ENCODE measurements at regions of chr6 and their contacts with region 1.

Region 1: GRCh38 chr6:71288228-71289001 is at the start of gene OGFRL1:
- DNase-seq: peak; percentile 72
- H3K4me3 Mint-ChIP-seq: peak within 1 kb of the TSS; percentile 78
- H3K27ac Mint-ChIP-seq: peak within 1 kb of the TSS; percentile 11
- H3K4me1 Mint-ChIP-seq: peaks cover 29% of the 10 kb centered on the region
- H3K27me3 Mint-ChIP-seq: no peaks in the 10 kb centered on the region
- CTCF ChIP-seq: no peak
- total RNA-seq, gene OGFRL1: 37.7 and 70.8 TPM in 2 replicates

Region 2: GRCh38 chr6:71248306-71248765 is 40.1 kb before region 1 on chr6:
- CTCF ChIA-PET with region 1: interaction called, 5 read pairs
- POLR2A ChIA-PET with region 1: interaction called, 51 read pairs
- intact Hi-C with region 1: loop called (anchors 2 kb)
- DNase-seq: peak; percentile 48
- H3K4me3 Mint-ChIP-seq: no peak overlapping the region
- H3K27ac Mint-ChIP-seq: no peak overlapping the region
- H3K4me1 Mint-ChIP-seq: peaks cover 32% of the 10 kb centered on the region
- H3K27me3 Mint-ChIP-seq: no peaks in the 10 kb centered on the region
- CTCF ChIP-seq: no peak

Region 3: GRCh38 chr6:71299541-71300470 is 11.4 kb after region 1 on chr6:
- CTCF ChIA-PET with region 1: interaction called, 13 read pairs
- POLR2A ChIA-PET with region 1: interaction called, 52 read pairs
- intact Hi-C with region 1: no loop called
- DNase-seq: peak; percentile 26
- H3K4me3 Mint-ChIP-seq: no peak overlapping the region
- H3K27ac Mint-ChIP-seq: peak overlapping the region; percentile 13
- H3K4me1 Mint-ChIP-seq: peaks cover 13% of the 10 kb centered on the region
- H3K27me3 Mint-ChIP-seq: no peaks in the 10 kb centered on the region
- CTCF ChIP-seq: no peak

Region 4: DNA sequence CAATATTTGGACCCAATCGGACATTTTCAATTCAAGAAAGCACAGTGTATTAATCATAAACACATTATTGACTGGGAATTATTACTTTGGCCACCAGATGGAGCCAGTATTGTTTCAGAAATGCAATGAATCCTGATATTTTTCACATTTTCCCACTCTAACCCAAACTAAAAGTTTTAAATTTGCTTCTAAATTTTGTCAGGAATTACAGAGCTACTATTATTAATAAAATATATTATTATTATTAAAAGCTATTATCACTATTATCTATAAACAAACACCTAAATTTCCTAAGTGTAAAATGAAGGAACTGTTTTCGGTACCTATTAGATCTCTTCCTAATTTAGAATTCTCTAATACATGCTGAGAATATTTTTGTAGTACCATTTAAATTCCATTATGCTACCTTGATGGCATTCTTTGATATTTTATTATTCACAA is 245.5 kb after region 1 on chr6:
- CTCF ChIA-PET with region 1: no interaction called
- POLR2A ChIA-PET with region 1: no interaction called
- intact Hi-C with region 1: no loop called
- DNase-seq: peak; percentile 42
- H3K4me3 Mint-ChIP-seq: no peak overlapping the region
- H3K27ac Mint-ChIP-seq: no peak overlapping the region
- H3K4me1 Mint-ChIP-seq: peaks cover 6% of the 10 kb centered on the region
- H3K27me3 Mint-ChIP-seq: peaks cover 36% of the 10 kb centered on the region
- CTCF ChIP-seq: peak; percentile 62

Region 5: GRCh38 chr6:71621918-71622519 is 333.6 kb after region 1 on chr6:
- CTCF ChIA-PET with region 1: no interaction called
- POLR2A ChIA-PET with region 1: no interaction called
- intact Hi-C with region 1: no loop called
- DNase-seq: peak; percentile 21
- H3K4me3 Mint-ChIP-seq: no peak overlapping the region
- H3K27ac Mint-ChIP-seq: no peak overlapping the region
- H3K4me1 Mint-ChIP-seq: no peaks in the 10 kb centered on the region
- H3K27me3 Mint-ChIP-seq: peaks cover 40% of the 10 kb centered on the region
- CTCF ChIP-seq: peak; percentile 45